ENCODE measurements at regions of chr16 and their contacts with region 1.

Region 1: DNA sequence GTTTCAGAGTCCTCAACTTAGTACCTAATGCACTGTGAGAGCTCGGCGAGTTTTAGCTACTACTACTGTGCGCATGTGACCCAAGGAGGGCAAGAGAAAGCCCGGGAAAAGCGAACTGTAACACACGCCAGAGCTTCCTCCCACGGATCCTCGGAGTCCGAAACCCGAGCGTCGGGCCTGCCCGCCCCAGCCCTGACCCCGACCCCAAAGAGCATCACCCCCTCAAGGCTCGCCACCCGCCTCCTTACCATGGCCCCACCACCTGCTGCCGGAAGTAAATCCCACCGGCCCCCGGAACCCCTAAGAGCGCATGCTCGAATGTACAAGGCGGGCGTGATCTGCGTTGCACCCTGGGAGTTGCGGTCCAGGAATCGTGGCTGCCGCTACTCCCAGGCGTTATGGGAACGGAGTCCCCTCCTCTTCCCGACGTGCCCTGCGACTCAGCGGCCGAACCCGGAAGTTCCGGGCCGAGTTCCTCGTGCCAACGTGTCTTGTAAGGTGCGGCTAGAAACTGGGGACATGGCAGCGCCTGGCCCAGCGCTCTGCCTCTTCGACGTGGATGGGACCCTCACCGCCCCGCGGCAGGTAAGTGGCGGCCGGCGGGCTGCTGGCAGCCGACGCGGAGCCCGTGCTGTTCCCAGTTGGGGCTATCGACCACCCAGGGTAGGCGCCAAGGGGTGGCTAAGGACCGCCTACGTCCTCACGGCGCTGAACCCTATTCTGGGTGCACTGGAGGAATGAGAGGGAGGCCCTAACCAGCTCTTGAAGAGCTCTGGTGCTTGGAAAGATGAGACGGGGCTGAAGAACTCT is at the starts of genes PMM2 and TMEM186:
- DNase-seq: peak; percentile 94 to 95
- H3K4me3 ChIP-seq: peak within 1 kb of the TSS; percentile 96
- H3K4me3 Mint-ChIP-seq: peak within 1 kb of the TSS; percentile 93
- H3K27ac Mint-ChIP-seq: peak within 1 kb of the TSS; percentile 94
- H3K4me1 ChIP-seq: no peaks in the 10 kb centered on the region; the same call in 1 of the 2 replicates
- H3K4me1 Mint-ChIP-seq: peaks cover 7% of the 10 kb centered on the region
- H3K27me3 ChIP-seq: no peaks in the 10 kb centered on the region
- H3K27me3 Mint-ChIP-seq: no peaks in the 10 kb centered on the region
- CTCF ChIP-seq: no peak
- total RNA-seq, gene PMM2: 66.3 and 69.0 TPM in 2 replicates
- total RNA-seq, gene TMEM186: 11.4 and 11.9 TPM in 2 replicates

Region 2: DNA sequence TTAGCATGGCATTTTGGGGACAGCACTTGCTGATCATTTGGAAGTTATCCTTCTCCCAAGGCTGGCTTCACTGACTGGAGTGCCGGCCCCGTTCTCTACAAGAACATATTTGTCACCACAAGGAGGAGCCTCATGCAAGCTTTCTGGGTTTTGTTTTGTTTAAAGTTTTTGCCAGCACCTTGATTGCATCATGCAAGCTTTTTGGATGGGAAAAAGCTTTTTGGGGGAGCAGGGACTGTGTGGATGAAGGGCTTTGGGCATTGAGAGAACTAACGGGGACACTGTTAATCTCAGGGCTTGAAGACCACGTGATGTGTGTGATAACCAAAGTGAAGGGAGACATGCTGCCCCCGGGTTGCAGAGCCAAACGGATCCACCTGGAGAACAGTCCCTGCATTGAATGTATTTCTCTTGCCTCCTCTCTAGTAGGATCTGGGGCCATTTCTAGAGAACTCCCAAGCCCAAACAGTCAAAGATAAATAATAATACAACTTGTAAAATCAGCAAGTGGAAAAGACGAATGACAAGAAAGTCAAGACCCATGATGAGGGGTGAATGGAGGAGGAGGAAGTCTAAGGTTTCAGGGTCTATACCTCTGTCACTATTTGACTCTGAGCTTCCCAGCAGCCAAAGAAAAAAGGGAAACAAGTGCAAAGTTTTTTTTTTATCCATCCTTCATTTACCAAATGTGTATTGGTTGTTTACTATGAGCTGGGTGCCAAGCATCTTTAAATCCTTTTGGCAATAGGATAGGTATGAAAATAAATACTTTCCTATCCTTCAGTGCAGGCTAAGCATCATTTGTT is 224.4 kb before region 1 on chr16:
- CTCF ChIA-PET with region 1: no interaction called
- POLR2A ChIA-PET with region 1: no interaction called
- intact Hi-C with region 1: loop called (anchors 5 kb)
- DNase-seq: peak in 1 of 2 experiments; percentile 38
- H3K4me3 ChIP-seq: no peak overlapping the region
- H3K4me3 Mint-ChIP-seq: no peak overlapping the region
- H3K27ac Mint-ChIP-seq: peak overlapping the region; percentile 64
- H3K4me1 ChIP-seq: peaks cover 6% of the 10 kb centered on the region; the same call in 1 of the 2 replicates
- H3K4me1 Mint-ChIP-seq: no peaks in the 10 kb centered on the region
- H3K27me3 ChIP-seq: no peaks in the 10 kb centered on the region
- H3K27me3 Mint-ChIP-seq: no peaks in the 10 kb centered on the region
- CTCF ChIP-seq: peak; percentile 43 to 51

Region 3: DNA sequence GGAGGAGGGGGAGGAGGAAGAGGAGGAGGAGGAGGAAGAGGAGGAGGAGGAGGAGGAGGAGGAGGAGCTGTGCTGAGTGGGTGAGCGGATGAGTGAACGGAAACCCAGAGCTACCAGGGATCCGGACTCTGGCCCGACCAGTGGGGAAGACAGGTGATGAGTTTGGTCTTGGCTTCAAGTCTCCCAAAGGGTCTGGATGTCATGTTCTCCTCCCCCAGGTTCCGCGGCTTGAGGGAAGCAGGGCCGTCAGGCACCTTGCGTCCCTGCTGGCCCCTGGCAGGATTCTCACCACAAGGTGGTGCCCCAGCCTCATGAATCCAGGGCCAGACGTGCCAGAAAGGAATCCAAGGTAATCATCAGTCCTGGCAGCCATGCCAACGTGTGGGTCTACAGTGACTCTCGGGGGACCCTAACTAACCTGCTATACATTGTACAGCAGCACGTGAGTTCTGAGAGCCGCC is 136.7 kb before region 1 on chr16:
- CTCF ChIA-PET with region 1: no interaction called
- POLR2A ChIA-PET with region 1: no interaction called
- intact Hi-C with region 1: loop called (anchors 1 kb)
- DNase-seq: peak; percentile 75 to 84
- H3K4me3 ChIP-seq: no peak overlapping the region
- H3K4me3 Mint-ChIP-seq: no peak overlapping the region
- H3K27ac Mint-ChIP-seq: no peak overlapping the region
- H3K4me1 ChIP-seq: no peaks in the 10 kb centered on the region
- H3K4me1 Mint-ChIP-seq: no peaks in the 10 kb centered on the region
- H3K27me3 ChIP-seq: no peaks in the 10 kb centered on the region
- H3K27me3 Mint-ChIP-seq: no peaks in the 10 kb centered on the region
- CTCF ChIP-seq: peak; percentile 69 to 89

Region 4: DNA sequence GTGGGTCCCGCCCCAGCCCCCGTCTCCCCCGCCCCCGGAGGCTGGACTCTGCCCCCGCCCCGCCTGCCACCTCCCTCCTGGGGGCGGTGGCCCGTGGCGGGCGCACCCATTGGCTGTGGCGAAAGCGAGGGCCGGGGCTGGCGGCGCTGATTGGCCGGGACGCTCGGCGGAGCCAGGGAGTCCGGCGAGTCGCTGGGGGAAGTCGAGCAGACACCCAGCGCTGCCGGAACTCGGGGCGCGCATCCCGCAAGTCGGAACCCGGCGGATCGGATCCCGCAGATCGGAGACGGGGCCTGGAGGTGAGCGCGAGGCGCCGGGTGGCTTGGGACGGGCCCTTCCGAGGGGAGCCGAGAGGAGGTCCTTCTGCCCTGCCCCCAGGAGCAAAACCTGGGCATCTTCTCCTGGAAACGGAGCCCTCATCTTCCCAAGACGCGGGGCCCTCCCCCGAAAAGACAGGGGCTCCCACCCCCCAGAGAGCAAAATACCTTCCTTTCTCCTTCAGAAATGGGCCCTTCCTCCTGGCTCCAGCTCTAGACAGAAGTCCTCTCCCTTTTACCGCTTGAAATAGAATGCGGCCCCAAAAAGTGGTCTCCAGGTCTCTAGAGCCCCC is 123.1 kb before region 1 on chr16 and contains the start of gene ABAT:
- CTCF ChIA-PET with region 1: no interaction called
- POLR2A ChIA-PET with region 1: no interaction called
- intact Hi-C with region 1: loop called (anchors 2 kb)
- DNase-seq: peak; percentile 88 to 93
- H3K4me3 ChIP-seq: peak within 1 kb of the TSS; percentile 80
- H3K4me3 Mint-ChIP-seq: peak within 1 kb of the TSS; percentile 83
- H3K27ac Mint-ChIP-seq: peak within 1 kb of the TSS; percentile 35
- H3K4me1 ChIP-seq: peaks cover 44% of the 10 kb centered on the region
- H3K4me1 Mint-ChIP-seq: peaks cover 19% of the 10 kb centered on the region
- H3K27me3 ChIP-seq: no peaks in the 10 kb centered on the region
- H3K27me3 Mint-ChIP-seq: no peaks in the 10 kb centered on the region
- CTCF ChIP-seq: no peak
- total RNA-seq, gene ABAT: 28.8 and 34.9 TPM in 2 replicates

Region 5: DNA sequence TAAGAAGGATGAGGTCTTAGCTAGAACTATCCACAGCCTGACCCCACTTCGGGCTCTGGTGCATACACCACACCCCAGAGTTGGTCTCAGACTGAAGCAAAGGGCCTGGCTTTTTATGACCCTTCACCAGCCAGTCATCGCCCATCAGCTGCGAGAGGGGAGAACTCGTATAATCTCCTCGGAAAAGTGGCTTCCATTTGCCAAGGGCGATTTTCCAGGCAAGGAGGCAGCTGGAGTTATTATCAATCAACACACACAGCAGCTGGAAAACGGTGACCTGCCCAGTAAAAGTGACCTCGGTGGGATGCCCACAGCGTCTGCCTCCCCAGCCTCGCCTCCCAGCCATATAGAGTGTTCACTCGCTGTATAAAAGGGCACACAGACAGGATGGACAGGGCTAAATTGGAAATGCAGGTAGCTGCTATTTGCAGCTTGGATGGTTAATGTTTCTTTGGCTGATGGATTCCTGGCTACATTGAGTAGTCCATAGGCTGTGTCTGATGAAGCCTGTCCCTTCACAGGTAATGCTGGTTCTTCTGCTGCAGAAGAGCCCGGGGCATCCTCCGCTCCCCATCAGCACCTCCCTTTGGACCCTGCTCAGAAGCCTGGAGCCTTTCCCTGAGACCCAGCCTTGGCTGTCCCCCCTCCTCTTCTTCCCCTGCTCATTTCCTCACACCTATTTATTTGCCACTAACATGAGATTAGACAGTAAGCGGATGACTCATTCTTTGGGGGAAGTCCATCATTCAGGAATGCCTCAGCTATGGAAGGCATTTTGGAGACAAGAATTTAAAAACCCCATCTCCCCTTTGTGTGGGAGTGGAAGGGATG is 45.9 kb before region 1 on chr16:
- CTCF ChIA-PET with region 1: interaction called, 6 read pairs
- POLR2A ChIA-PET with region 1: no interaction called
- intact Hi-C with region 1: loop called (anchors 2 kb)
- DNase-seq: peak; percentile 43 to 47
- H3K4me3 ChIP-seq: no peak overlapping the region
- H3K4me3 Mint-ChIP-seq: no peak overlapping the region
- H3K27ac Mint-ChIP-seq: peak overlapping the region; percentile 83
- H3K4me1 ChIP-seq: peaks cover 43% of the 10 kb centered on the region
- H3K4me1 Mint-ChIP-seq: peaks cover 24% of the 10 kb centered on the region
- H3K27me3 ChIP-seq: no peaks in the 10 kb centered on the region
- H3K27me3 Mint-ChIP-seq: no peaks in the 10 kb centered on the region
- CTCF ChIP-seq: no peak

Region 6: GRCh38 chr16:8868416-8869211 is 71.0 kb after region 1 on chr16 and contains the start of gene CARHSP1:
- CTCF ChIA-PET with region 1: no interaction called
- POLR2A ChIA-PET with region 1: interaction called, 9 read pairs
- intact Hi-C with region 1: loop called (anchors 5 kb)
- DNase-seq: peak; percentile 89
- H3K4me3 ChIP-seq: peak within 1 kb of the TSS; percentile 62
- H3K4me3 Mint-ChIP-seq: peak within 1 kb of the TSS; percentile 97
- H3K27ac Mint-ChIP-seq: peak within 1 kb of the TSS; percentile 97
- H3K4me1 ChIP-seq: peaks cover 42% of the 10 kb centered on the region
- H3K4me1 Mint-ChIP-seq: peaks cover 15% of the 10 kb centered on the region
- H3K27me3 ChIP-seq: no peaks in the 10 kb centered on the region
- H3K27me3 Mint-ChIP-seq: no peaks in the 10 kb centered on the region
- CTCF ChIP-seq: no peak
- total RNA-seq, gene CARHSP1: 103 and 105 TPM in 2 replicates

Region 7: DNA sequence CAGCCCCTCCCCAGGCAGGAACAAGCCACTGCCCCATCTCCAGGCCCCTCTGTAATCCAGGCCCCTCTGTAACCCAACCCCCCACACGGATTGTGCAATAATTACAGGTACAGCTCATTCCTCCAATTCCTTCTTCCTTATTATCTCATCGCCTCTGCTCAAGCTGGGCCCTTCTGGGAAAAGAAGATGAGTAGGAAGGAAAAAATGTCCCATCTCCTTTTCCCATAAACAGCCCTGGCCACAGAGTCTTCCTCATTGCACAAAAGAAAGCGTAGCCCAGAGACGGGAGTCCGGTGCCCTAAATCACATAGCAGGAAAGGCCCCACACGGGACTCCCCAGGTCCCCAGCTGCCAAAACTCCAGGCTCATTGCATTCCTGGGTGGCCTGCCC is 80.9 kb after region 1 on chr16:
- CTCF ChIA-PET with region 1: interaction called, 3 read pairs
- POLR2A ChIA-PET with region 1: interaction called, 4 read pairs
- intact Hi-C with region 1: loop called (anchors 5 kb)
- DNase-seq: peak; percentile 69 to 74
- H3K4me3 ChIP-seq: no peak overlapping the region
- H3K4me3 Mint-ChIP-seq: no peak overlapping the region
- H3K27ac Mint-ChIP-seq: peak overlapping the region; percentile 60
- H3K4me1 ChIP-seq: peaks cover 18% of the 10 kb centered on the region
- H3K4me1 Mint-ChIP-seq: peaks cover 18% of the 10 kb centered on the region
- H3K27me3 ChIP-seq: no peaks in the 10 kb centered on the region
- H3K27me3 Mint-ChIP-seq: no peaks in the 10 kb centered on the region
- CTCF ChIP-seq: no peak

Measured in Caco-2 (cell line).